Activated CD4-positive, alpha-beta T cell treated with anti-CD3 and anti-CD28 coated beads, Interleukin-2, amount 10 ng/mL, durations not matched to agents 24 days and 14 days (primary cell): ENCODE measurements at regions of chr22 and their contacts with region 1.

Region 1: DNA sequence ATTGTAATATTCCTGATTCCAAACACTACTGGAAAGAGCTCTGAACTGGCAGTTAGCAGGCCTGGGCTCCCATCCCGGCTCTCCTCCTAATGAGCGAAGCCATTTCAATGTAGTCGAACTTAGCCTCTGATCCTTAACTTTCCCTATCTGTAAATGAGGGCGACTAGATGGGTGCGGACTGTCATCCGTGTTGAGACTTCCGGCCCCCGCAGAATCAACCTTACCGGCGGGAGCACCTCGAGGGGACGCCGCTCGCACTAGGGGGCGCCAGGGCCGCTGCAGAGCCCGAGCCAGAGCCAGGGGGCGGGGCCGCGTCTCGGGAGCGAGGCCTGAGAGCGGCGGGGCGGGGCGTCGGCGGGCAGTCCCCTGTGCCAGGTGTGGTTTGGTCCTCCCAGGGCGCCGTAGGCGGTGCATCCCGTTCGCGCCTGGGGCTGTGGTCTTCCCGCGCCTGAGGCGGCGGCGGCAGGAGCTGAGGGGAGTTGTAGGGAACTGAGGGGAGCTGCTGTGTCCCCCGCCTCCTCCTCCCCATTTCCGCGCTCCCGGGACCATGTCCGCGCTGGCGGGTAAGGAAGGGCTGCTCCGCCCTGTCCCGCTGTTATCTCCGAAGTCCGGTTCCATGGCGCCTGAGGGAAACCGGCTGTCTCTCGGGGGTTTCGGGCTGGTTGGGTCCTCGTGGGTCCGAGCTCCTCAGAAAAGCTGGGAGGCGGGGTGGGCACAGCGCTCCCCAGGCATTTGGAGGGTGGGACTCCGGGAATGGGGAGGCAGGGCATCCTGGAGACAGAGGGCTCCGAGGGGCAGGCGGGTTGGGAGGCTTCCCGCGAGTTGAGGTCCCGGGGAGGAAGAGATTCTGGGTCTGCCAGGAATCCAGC is at the start of gene LIMK2:
- DNase-seq: peak; percentile 99
- H3K4me3 Mint-ChIP-seq: peak within 1 kb of the TSS; percentile 88
- H3K27ac Mint-ChIP-seq: peak within 1 kb of the TSS; percentile 86
- H3K4me1 Mint-ChIP-seq: peaks cover 43% of the 10 kb centered on the region
- H3K27me3 Mint-ChIP-seq: no peaks in the 10 kb centered on the region
- total RNA-seq, gene LIMK2: 34.2 and 35.9 TPM in 2 replicates

Region 2: DNA sequence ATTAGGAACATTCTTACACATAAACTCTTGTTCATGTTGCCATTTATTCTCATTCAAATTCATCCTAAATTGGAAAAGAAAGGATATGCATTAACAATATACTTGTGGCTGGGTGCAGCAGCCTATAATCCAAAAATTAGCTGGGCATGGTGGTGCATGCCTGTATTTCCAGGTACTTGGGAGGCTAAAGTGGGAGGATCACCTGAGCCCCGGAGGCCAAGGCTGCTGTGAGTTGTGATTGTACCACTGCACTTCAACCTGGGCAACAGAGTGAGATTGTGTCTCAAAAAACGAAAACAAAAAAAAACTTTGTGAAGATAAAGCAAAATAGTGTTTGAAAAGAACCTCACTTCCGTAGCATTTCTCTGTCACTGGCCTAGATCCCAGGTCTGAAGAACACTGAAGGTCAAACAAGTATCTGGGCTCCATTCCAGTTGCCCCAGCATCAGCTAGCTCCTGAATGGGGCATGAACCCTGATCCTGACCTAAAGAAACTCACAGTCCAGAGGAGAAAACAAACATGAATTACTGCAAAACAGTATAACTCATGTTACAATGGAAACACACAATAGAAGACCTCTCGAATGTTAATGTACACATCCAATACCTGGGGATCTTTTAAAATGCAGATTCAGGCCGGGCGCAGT is 210.8 kb before region 1 on chr22:
- intact Hi-C with region 1: no loop called
- DNase-seq: no peak
- H3K4me3 Mint-ChIP-seq: no peak overlapping the region
- H3K27ac Mint-ChIP-seq: no peak overlapping the region
- H3K4me1 Mint-ChIP-seq: no peaks in the 10 kb centered on the region
- H3K27me3 Mint-ChIP-seq: no peaks in the 10 kb centered on the region

Region 3: DNA sequence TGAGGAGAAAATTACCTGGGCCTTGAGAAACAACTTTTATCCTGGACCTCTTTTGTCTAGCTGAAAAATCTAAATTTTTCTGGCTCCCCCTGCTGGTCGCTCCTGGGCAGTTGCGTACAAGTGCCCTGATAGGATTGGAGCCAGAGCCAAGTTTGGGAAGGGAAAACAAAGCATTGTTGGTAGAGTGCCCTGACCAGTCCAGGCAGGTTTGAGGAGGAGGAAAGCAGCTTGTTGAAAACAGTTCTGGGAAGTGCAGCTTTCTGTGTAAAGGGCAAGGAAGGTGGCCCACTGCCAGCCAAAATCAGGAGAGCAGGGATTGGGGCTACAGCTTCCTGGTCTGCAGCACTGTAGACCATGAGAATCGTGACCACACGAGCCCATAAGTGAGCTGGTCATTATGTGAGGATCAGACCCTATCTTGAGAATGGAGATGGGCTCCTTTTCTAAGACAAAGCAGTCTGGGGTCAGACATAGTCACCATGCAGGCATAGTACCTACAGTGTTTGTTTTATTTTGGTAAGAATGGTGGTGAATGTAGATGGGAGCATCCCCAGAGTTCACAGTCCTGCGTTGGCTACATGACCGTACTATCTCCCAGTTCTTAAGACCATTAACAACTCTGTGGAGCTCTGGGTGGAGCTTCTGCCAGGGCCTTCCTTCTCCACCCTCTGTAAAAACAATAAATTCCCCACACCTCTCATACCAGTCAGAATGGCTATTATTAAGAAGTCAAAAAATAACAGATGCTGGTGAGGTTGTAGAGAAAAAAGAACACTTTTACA is 101.5 kb after region 1 on chr22:
- intact Hi-C with region 1: loop called (anchors 1 kb)
- DNase-seq: peak; percentile 89
- H3K4me3 Mint-ChIP-seq: no peak overlapping the region
- H3K27ac Mint-ChIP-seq: no peak overlapping the region
- H3K4me1 Mint-ChIP-seq: peaks cover 7% of the 10 kb centered on the region
- H3K27me3 Mint-ChIP-seq: no peaks in the 10 kb centered on the region